ENCODE measurements at regions of chr15 and their contacts with region 1.

Region 1: GRCh38 chr15:56732921-56733797 is at the start of gene ZNF280D:
- DNase-seq: peak; percentile 91
- H3K4me3 ChIP-seq: peak within 1 kb of the TSS; percentile 19 to 70 (median 68)
- H3K27ac ChIP-seq: peak within 1 kb of the TSS; percentile 59
- H3K4me1 ChIP-seq: peaks cover 34% of the 10 kb centered on the region
- H3K27me3 ChIP-seq: no peaks in the 10 kb centered on the region
- CTCF ChIP-seq: no peak
- POLR2A ChIP-seq: peak; percentile 72
- total RNA-seq, gene ZNF280D: 35.8 and 42.1 TPM in 2 replicates

Region 2: DNA sequence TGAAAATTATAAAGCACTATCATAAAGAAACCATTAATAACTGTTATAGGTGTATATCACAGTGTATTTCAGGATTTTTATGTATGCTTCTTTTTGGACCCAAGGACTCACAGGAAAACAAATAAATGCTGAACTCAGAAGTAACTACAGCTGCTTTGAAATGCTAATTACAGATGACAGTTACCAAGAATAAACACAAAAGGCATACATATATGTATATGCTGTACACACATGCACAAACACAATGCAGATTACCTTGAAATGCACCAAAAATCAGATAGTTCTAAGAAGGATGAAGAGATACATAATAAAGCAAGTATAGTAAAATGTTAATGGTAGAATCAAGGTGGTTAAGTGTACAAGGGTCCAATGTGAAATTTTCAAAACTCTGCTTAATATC is 52.0 kb before region 1 on chr15:
- CTCF ChIA-PET with region 1: no interaction called
- POLR2A ChIA-PET with region 1: no interaction called
- dilution Hi-C with region 1: no loop called
- intact Hi-C with region 1: no loop called
- DNase-seq: no peak
- H3K4me3 ChIP-seq: no peak overlapping the region
- H3K27ac ChIP-seq: no peak overlapping the region
- H3K4me1 ChIP-seq: no peaks in the 10 kb centered on the region
- H3K27me3 ChIP-seq: no peaks in the 10 kb centered on the region
- CTCF ChIP-seq: no peak
- POLR2A ChIP-seq: no peak

Region 3: DNA sequence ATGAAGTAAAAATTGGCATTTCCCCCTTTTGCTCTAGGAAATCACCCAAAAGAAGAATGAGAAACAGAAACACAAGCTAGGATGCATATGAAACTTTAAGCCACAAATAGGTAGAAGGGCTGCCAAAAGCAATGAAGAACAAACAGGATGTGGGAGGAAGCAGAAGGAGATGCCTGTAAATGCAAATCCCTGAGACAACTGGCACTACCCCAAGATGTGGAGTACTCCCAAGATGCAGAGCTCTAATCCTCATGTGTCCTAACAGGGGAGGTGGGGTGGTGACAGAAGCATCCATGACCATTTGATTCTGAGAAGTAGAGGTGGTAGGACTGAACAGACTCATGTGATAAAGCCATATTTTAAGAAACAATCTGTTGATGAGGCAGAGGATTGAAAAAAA is 32.1 kb after region 1 on chr15:
- CTCF ChIA-PET with region 1: interaction called, 5 read pairs
- POLR2A ChIA-PET with region 1: interaction called, 4 read pairs
- dilution Hi-C with region 1: no loop called
- intact Hi-C with region 1: loop called (anchors 2 kb)
- DNase-seq: peak; percentile 90
- H3K4me3 ChIP-seq: no peak overlapping the region
- H3K27ac ChIP-seq: peak overlapping the region; percentile 24
- H3K4me1 ChIP-seq: peaks cover 39% of the 10 kb centered on the region
- H3K27me3 ChIP-seq: no peaks in the 10 kb centered on the region
- CTCF ChIP-seq: no peak
- POLR2A ChIP-seq: no peak

Region 4: DNA sequence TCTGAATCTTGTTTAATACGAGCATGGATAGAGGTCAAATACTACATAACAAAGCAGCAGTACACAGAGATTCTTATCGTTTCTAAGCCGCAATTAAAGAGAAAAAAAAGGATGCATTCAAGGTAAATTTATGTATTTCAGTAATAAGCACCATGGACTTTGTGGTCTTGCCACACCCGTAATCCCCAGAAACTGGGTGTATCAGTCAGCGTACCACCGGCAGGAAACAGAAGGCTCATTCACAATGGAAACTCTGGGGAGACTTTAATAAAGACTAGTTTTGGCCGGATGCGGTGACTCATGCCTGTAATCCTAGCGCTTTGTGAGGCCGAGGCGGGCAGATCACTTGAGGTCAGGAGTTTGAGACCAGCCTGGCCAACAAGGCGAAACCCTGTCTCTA is 82.1 kb after region 1 on chr15:
- CTCF ChIA-PET with region 1: interaction called, 4 read pairs
- POLR2A ChIA-PET with region 1: no interaction called
- dilution Hi-C with region 1: no loop called
- intact Hi-C with region 1: loop called (anchors 2 kb)
- DNase-seq: peak; percentile 75
- H3K4me3 ChIP-seq: no peak overlapping the region
- H3K27ac ChIP-seq: peak overlapping the region; percentile 33
- H3K4me1 ChIP-seq: peaks cover 34% of the 10 kb centered on the region
- H3K27me3 ChIP-seq: peaks cover 0 to 10% of the 10 kb centered on the region in 2 experiments
- CTCF ChIP-seq: no peak
- POLR2A ChIP-seq: no peak

Region 5: DNA sequence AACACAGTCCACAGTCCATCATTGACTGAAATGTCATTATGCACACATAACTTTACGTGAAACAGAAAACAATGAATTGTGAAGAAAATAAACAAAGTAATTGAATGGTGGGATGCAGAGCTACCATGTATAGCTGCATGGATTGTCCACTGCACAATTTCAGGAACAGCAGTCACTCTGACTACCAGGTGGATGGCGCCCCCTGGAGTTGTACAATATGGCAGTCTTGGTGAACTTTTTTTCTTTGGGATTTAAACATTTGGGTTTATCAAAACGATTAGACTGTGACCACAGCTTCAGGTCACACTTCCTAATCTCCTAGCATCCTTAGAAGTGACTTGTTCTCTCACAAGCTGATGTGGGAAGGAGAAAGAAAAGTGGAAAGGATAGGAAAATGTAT is 136.4 kb after region 1 on chr15:
- CTCF ChIA-PET with region 1: no interaction called
- POLR2A ChIA-PET with region 1: no interaction called
- dilution Hi-C with region 1: no loop called
- intact Hi-C with region 1: loop called (anchors 2 kb)
- DNase-seq: peak; percentile 31
- H3K4me3 ChIP-seq: no peak overlapping the region
- H3K27ac ChIP-seq: no peak overlapping the region
- H3K4me1 ChIP-seq: peaks cover 16% of the 10 kb centered on the region
- H3K27me3 ChIP-seq: no peaks in the 10 kb centered on the region
- CTCF ChIP-seq: peak; percentile 41 to 46
- POLR2A ChIP-seq: no peak

Region 6: DNA sequence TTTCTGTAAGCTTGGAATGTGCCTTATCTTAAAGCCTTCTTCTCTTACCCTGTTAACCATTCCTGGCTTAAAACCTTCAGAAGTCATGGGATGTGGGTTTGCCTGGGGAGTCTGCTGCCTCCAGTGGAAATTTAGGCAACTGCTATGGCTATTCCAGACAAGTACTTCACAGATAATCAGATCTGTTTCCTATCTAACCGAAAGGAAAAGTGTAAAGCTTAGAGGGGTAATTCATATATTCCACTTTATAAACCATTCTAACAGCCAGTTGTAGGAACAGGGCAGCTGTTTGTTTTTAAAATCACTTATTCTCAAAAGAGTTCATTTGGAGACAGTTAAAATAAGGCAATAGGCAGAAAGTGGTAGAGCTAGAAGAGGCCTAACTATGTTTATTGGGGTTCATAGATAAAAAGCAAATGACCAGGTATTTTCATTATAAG is 405.2 kb after region 1 on chr15:
- CTCF ChIA-PET with region 1: no interaction called
- POLR2A ChIA-PET with region 1: no interaction called
- dilution Hi-C with region 1: no loop called
- intact Hi-C with region 1: loop called (anchors 10 kb)
- DNase-seq: peak; percentile 75
- H3K4me3 ChIP-seq: no peak overlapping the region
- H3K27ac ChIP-seq: no peak overlapping the region
- H3K4me1 ChIP-seq: peaks cover 33% of the 10 kb centered on the region
- H3K27me3 ChIP-seq: no peaks in the 10 kb centered on the region
- CTCF ChIP-seq: peak; percentile 61 to 74
- POLR2A ChIP-seq: no peak

Measured in endothelial cell of umbilical vein (primary cell).